OCI-LY7 (cell line): ENCODE measurements at regions of chr5 and their contacts with region 1.

Region 1: GRCh38 chr5:149345147-149345875 is at the start of gene GRPEL2:
- DNase-seq: peak; percentile 98
- H3K4me3 ChIP-seq: peak within 1 kb of the TSS; percentile 88
- H3K27ac ChIP-seq: peak within 1 kb of the TSS; percentile 78
- H3K4me1 ChIP-seq: peaks cover 29% of the 10 kb centered on the region
- CTCF ChIP-seq: no peak
- total RNA-seq, gene GRPEL2: 17.4 and 28.3 TPM in 2 replicates

Region 2: DNA sequence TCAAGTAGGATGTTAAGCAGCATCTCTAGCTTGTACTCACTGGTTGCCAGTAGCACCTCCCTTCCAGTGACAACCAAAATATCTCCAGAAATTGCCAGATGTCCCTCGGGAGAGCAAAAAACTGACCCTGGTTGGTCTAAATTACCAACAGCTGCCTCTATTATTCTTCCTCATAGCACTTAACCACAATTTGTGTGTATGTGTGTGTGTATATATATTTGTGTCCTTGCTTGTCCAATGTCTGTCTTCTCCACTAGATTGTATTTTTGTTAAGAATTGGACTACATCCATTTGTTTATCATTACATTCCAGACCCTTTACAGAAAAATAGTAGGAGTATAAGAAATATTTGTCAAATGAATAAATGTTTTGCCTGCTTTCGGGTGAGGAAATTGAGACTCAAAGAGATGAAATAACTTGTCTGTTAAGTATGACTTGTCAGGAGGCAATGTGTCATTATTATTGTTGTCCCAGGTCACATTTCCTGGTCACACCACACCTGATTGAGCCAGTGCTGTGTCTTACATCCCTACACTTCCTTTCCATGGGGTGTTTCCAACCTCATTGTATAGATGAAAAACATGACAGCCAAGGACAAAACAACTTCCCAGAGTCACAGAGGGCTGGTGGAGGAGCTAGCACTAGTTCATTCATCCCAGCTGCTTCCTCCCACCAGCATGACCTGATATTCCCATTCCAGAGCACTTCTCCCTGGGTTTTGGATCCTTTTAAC is 11.4 kb before region 1 on chr5:
- CTCF ChIA-PET with region 1: interaction called, 3 read pairs
- POLR2A ChIA-PET with region 1: interaction called, 17 read pairs
- intact Hi-C with region 1: no loop called
- DNase-seq: no peak
- H3K4me3 ChIP-seq: no peak overlapping the region
- H3K27ac ChIP-seq: no peak overlapping the region
- H3K4me1 ChIP-seq: no peaks in the 10 kb centered on the region
- CTCF ChIP-seq: no peak

Region 3: GRCh38 chr5:149357370-149358293 is 12.3 kb after region 1 on chr5 and contains the start of gene PCYOX1L:
- CTCF ChIA-PET with region 1: interaction called, 4 read pairs
- POLR2A ChIA-PET with region 1: interaction called, 183 read pairs
- intact Hi-C with region 1: loop called (anchors 1 kb)
- DNase-seq: peak; percentile 96
- H3K4me3 ChIP-seq: peak within 1 kb of the TSS; percentile 94
- H3K27ac ChIP-seq: peak within 1 kb of the TSS; percentile 53
- H3K4me1 ChIP-seq: peaks cover 21% of the 10 kb centered on the region
- CTCF ChIP-seq: no peak
- total RNA-seq, gene PCYOX1L: 18.5 and 22.5 TPM in 2 replicates

Region 4: GRCh38 chr5:149551200-149552037 is 206.1 kb after region 1 on chr5 and contains the start of gene CSNK1A1:
- CTCF ChIA-PET with region 1: no interaction called
- POLR2A ChIA-PET with region 1: interaction called, 14 read pairs
- intact Hi-C with region 1: loop called (anchors 5 kb)
- DNase-seq: peak; percentile 99
- H3K4me3 ChIP-seq: peak within 1 kb of the TSS; percentile 98
- H3K27ac ChIP-seq: peak within 1 kb of the TSS; percentile 83
- H3K4me1 ChIP-seq: peaks cover 32% of the 10 kb centered on the region
- CTCF ChIP-seq: peak; percentile 92
- total RNA-seq, gene CSNK1A1: 161 and 176 TPM in 2 replicates

Region 5: DNA sequence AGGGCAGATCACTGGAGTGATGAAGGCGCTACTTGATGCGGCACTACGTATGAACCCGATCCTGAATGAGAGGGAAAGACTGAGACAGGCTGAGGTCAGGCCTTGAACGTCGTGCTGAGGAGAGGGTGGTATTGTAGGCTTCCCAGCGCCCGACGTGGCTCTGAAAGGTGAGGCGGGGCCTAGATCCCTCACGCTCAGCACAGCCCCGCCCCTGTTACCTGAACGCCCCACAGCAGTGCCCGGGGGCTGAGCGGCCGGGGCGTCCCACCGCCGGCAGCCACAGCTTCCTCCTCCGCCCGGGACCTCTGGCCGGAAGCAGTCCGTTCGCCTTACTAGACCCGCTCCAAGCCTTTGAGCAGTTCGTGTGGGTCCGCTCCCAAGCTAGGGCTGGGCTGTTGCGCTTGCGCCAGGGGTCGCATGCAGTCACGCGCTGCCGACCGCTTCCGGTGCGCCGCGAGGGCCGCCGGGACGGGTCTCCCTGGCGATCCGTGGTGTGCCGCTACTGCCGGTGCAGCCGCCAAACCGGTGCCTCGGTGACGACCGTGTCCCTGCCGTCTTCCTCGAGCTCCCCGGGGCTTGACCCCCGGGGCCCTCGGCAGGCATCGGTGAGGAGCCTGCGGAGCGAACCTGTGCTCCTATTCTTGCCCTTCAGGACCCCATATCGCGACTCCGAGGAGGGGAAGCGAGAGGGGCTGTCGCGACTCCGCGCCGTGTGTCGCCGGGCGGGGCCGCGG is 655.1 kb after region 1 on chr5 and contains the starts of genes HMGXB3 and TIGD6:
- CTCF ChIA-PET with region 1: no interaction called
- POLR2A ChIA-PET with region 1: interaction called, 4 read pairs
- intact Hi-C with region 1: loop called (anchors 2 kb)
- DNase-seq: peak; percentile 96
- H3K4me3 ChIP-seq: peak within 1 kb of the TSS; percentile 83
- H3K27ac ChIP-seq: peak within 1 kb of the TSS; percentile 66
- H3K4me1 ChIP-seq: peaks cover 27% of the 10 kb centered on the region
- CTCF ChIP-seq: no peak
- total RNA-seq, gene HMGXB3: 35.1 and 40.4 TPM in 2 replicates
- total RNA-seq, gene TIGD6: 3.4 and 5.4 TPM in 2 replicates